Adrenal gland (tissue), 19 donors: ENCODE measurements at regions of chr6 and their contacts with region 1.

Region 1: GRCh38 chr6:83221889-83222479 is 28.8 kb downstream of the RWDD2A start:
- DNase-seq: no peak
- H3K4me3 ChIP-seq: no peak overlapping the region
- H3K27ac ChIP-seq: no peak overlapping the region
- H3K4me1 ChIP-seq: peaks cover 0 to 7% of the 10 kb centered on the region in 2 donors
- H3K27me3 ChIP-seq: no peaks in the 10 kb centered on the region
- CTCF ChIP-seq: peak; percentile 16 to 66 (median 49)
- POLR2A ChIP-seq: no peak

Region 2: GRCh38 chr6:83417880-83418663 is 196.1 kb after region 1 on chr6:
- intact Hi-C with region 1: loop called in 1 of 2 experiments (anchors 5 kb)
- DNase-seq: peak in 1 of 7 donors; percentile 30
- H3K4me3 ChIP-seq: no peak overlapping the region
- H3K27ac ChIP-seq: peak overlapping the region in 1 of 5 donors; percentile 16
- H3K4me1 ChIP-seq: peaks cover 6 to 19% of the 10 kb centered on the region in 2 donors
- H3K27me3 ChIP-seq: no peaks in the 10 kb centered on the region
- CTCF ChIP-seq: peak; percentile 47 to 85 (median 76)
- POLR2A ChIP-seq: no peak